Psoas muscle (tissue), 8 donors: ENCODE measurements at regions of chr19 and their contacts with region 1.

Region 1: DNA sequence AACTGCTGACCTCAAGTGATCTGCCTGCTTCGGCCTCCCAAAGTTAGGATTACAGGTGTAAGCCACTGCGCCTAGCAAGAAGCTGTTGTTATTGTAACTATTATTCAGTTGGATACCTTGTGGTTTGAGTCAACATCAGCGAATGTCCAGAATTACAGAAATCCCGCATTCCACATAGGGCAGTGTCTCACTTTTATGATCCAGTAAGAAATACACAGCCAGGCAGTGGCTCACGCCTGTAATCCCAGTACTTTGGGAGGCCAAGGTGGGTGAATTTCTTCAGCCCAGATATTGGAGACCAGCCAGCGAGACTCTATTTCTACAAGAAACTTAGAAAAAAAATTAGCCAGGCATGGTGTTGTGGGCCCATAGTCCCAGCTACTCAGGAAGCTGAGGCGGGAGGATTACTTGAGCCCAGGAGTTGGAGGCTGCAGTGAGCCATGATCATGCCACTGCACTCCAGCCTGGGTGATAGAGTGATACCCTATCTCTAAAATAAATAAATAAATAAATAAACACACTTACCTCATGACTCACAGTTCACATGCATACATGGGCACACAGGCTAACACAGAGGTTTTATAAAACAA is 43.8 kb downstream of the SPTBN4 start:
- DNase-seq: no peak
- ATAC-seq: no peak
- H3K4me3 ChIP-seq: no peak overlapping the region
- H3K27ac ChIP-seq: no peak overlapping the region
- H3K4me1 ChIP-seq: no peaks in the 10 kb centered on the region
- H3K27me3 ChIP-seq: peaks cover 0 to 30% (median 2%) of the 10 kb centered on the region in 3 donors
- CTCF ChIP-seq: no peak

Region 2: DNA sequence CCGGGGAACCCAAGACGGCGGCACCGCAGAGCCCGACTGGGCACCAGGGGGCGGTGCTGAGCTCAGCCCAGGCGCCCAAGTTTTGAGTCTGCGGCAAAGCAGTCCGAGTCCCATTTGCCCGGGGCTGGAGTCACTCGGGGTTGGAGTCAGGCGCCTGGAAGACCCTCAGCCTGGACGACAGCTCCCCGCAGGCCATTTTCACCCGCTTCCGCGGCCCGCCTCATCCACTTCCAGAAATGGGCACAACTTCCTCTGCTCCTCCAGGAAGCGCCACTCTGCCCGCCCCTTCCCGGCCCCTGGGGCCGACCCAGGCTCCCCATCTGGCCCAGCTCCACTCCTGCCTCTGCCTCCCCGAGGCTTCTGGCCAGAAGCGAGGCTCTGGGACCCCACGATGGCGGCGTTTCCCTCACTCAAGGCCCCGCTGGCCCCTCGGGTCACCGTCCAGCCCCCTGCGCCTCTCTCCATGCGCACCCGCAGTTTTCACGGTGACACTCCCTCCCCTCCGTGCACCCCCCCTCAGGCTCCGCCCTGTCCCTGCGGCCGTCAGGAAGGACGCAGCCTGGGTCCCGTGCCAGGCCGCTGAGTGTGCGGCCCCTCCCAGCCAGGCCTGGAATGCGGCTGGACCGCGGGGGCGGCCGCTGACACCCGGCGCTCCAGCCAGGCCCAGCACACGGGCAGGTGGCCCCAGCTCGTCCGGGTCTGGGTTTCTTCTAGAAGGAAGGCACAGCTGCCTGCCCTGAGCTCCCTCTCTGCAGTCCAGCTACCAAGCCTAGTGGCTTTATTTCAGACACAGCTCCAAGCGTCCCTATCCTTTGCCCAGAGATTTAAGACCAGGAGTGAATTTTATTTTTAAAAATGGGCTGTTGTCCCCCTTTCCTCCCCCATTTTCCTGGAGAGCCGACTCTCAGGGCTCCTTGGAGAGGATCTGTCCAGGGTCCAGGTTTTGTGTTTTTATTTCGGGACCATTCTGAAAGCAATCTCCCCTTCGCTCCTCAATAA is 89.6 kb before region 1 on chr19:
- intact Hi-C with region 1: no loop called
- DNase-seq: peak; percentile 97 to 98
- ATAC-seq: peak; percentile 82 to 86 (median 84)
- H3K4me3 ChIP-seq: peak overlapping the region; percentile 88
- H3K27ac ChIP-seq: peak overlapping the region; percentile 99
- H3K4me1 ChIP-seq: peaks cover 32% of the 10 kb centered on the region
- H3K27me3 ChIP-seq: no peaks in the 10 kb centered on the region
- CTCF ChIP-seq: peak; percentile 93

Region 3: DNA sequence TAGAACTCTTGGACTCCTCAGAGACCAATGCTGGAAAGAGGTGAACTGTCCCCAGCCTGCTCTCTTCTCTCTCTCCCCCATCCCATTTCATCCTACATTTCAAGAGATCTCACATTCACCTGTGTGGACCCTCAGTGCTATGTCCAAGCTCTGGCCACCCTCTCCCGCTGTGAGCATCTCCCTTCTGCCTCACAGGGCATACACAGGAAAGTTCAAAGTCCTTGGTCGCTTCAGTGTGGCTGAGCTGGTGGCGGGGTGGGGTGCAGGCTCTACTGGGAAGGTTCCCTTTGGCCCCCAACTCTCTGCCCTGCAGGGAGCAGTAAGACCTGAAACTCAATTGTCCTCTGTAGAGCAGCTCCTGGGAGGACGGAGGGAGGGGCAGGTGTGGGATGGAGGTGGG is 16.8 kb before region 1 on chr19:
- intact Hi-C with region 1: loop called in 1 of 2 experiments (anchors 2 kb)
- DNase-seq: no peak
- ATAC-seq: no peak
- H3K4me3 ChIP-seq: no peak overlapping the region
- H3K27ac ChIP-seq: no peak overlapping the region
- H3K4me1 ChIP-seq: no peaks in the 10 kb centered on the region
- H3K27me3 ChIP-seq: no peaks in the 10 kb centered on the region
- CTCF ChIP-seq: no peak